ENCODE measurements at regions of chr16 and their contacts with region 1.

Region 1: GRCh38 chr16:86575754-86576557 is 2.4 kb upstream of the FOXL1 start:
- DNase-seq: peak; percentile 92
- H3K4me3 ChIP-seq: peak overlapping the region; percentile 54 to 67 (median 62)
- H3K27ac ChIP-seq: peak overlapping the region; percentile 68
- H3K4me1 ChIP-seq: peaks cover 22% of the 10 kb centered on the region
- H3K27me3 ChIP-seq: no peaks in the 10 kb centered on the region
- CTCF ChIP-seq: peak in 1 of 2 donors; percentile 60

Region 2: DNA sequence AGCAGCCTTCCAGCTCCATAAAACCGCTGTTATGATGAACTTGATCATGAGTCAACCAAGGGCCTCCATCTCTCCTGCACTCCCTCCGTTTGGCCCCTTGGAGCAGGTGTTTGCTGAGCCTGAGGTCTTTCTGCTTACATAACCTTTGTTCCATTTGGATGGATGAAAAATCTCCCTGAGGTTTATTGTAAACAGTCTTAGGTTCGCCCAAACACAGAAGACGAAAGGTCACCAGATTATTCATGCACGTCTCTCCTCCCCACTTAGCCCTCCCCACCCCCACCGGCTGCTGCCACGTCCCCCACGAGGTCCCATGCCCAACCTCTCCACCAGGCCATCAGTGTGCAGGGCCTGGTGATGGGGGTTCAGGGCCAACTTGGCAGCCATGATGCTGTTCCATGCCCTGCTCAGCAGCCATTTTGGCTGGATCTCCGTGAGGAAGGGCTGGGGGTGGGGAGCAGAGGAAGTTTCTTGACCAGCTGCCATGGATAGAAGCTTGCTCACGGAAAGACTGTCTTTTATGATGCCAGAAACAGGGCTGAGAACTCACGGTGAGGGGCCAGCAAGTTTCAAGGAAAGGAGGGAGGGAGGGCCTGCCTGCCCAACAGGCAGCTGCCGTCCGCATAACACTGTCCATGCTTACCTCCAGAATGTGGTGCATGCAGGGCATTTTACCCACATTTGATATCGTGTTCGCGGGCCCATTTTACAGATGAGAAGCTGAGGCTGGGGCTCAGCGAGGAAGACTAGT is 113.4 kb before region 1 on chr16:
- CTCF ChIA-PET with region 1: no interaction called
- dilution Hi-C with region 1: no loop called
- in situ Hi-C with region 1: no loop called
- intact Hi-C with region 1: no loop called
- DNase-seq: no peak
- H3K4me3 ChIP-seq: no peak overlapping the region
- H3K27ac ChIP-seq: no peak overlapping the region
- H3K4me1 ChIP-seq: no peaks in the 10 kb centered on the region
- H3K27me3 ChIP-seq: no peaks in the 10 kb centered on the region
- CTCF ChIP-seq: no peak

Region 3: GRCh38 chr16:86554917-86555703 is 20.8 kb before region 1 on chr16 and contains the start of gene MTHFSD:
- CTCF ChIA-PET with region 1: no interaction called
- dilution Hi-C with region 1: no loop called
- in situ Hi-C with region 1: no loop called
- intact Hi-C with region 1: no loop called
- DNase-seq: peak; percentile 85
- H3K4me3 ChIP-seq: peak within 1 kb of the TSS; percentile 75 to 93 (median 90)
- H3K27ac ChIP-seq: peak within 1 kb of the TSS; percentile 81
- H3K4me1 ChIP-seq: peaks cover 14% of the 10 kb centered on the region
- H3K27me3 ChIP-seq: no peaks in the 10 kb centered on the region
- CTCF ChIP-seq: no peak
- total RNA-seq, gene MTHFSD: 17.3 to 25.4 TPM

Region 4: DNA sequence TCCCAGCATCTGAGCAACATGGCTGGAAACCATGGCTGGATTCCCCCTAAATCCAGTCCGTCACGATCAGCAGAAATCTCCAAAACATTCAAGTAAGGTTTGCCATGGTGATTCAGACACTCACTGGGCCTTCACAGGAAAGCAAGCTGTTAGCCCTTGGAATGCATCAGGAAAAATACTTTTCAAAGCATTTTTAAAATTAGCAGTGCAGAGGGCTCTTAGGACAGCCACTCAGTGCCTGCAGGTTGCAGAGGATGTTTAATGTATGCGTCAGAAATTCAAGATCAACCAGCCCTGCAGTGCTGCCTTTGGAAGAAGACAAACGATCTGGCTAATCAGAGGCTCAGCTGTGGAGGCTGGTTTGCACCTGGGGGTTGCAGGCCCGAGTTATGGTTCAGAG is 52.7 kb after region 1 on chr16:
- CTCF ChIA-PET with region 1: no interaction called
- dilution Hi-C with region 1: no loop called
- in situ Hi-C with region 1: no loop called
- intact Hi-C with region 1: no loop called
- DNase-seq: no peak
- H3K4me3 ChIP-seq: no peak overlapping the region
- H3K27ac ChIP-seq: no peak overlapping the region
- H3K4me1 ChIP-seq: peaks cover 28% of the 10 kb centered on the region
- H3K27me3 ChIP-seq: no peaks in the 10 kb centered on the region
- CTCF ChIP-seq: no peak

Region 5: GRCh38 chr16:86680162-86680561 is 104.2 kb after region 1 on chr16:
- CTCF ChIA-PET with region 1: no interaction called
- dilution Hi-C with region 1: no loop called
- in situ Hi-C with region 1: no loop called
- intact Hi-C with region 1: loop called (anchors 5 kb)
- DNase-seq: peak; percentile 77
- H3K4me3 ChIP-seq: no peak overlapping the region
- H3K27ac ChIP-seq: no peak overlapping the region
- H3K4me1 ChIP-seq: peaks cover 32% of the 10 kb centered on the region
- H3K27me3 ChIP-seq: no peaks in the 10 kb centered on the region
- CTCF ChIP-seq: no peak

Region 6: GRCh38 chr16:86761111-86762031 is 185.4 kb after region 1 on chr16:
- CTCF ChIA-PET with region 1: no interaction called
- dilution Hi-C with region 1: no loop called
- in situ Hi-C with region 1: no loop called
- intact Hi-C with region 1: loop called (anchors 2 kb)
- DNase-seq: peak; percentile 39
- H3K4me3 ChIP-seq: no peak overlapping the region
- H3K27ac ChIP-seq: no peak overlapping the region
- H3K4me1 ChIP-seq: peaks cover 10% of the 10 kb centered on the region
- H3K27me3 ChIP-seq: no peaks in the 10 kb centered on the region
- CTCF ChIP-seq: peak; percentile 66 to 85

Region 7: GRCh38 chr16:86789621-86790051 is 213.7 kb after region 1 on chr16:
- CTCF ChIA-PET with region 1: no interaction called
- dilution Hi-C with region 1: no loop called
- in situ Hi-C with region 1: no loop called
- intact Hi-C with region 1: no loop called
- DNase-seq: no peak
- H3K4me3 ChIP-seq: no peak overlapping the region
- H3K27ac ChIP-seq: no peak overlapping the region
- H3K4me1 ChIP-seq: no peaks in the 10 kb centered on the region
- H3K27me3 ChIP-seq: no peaks in the 10 kb centered on the region
- CTCF ChIP-seq: no peak

Region 8: DNA sequence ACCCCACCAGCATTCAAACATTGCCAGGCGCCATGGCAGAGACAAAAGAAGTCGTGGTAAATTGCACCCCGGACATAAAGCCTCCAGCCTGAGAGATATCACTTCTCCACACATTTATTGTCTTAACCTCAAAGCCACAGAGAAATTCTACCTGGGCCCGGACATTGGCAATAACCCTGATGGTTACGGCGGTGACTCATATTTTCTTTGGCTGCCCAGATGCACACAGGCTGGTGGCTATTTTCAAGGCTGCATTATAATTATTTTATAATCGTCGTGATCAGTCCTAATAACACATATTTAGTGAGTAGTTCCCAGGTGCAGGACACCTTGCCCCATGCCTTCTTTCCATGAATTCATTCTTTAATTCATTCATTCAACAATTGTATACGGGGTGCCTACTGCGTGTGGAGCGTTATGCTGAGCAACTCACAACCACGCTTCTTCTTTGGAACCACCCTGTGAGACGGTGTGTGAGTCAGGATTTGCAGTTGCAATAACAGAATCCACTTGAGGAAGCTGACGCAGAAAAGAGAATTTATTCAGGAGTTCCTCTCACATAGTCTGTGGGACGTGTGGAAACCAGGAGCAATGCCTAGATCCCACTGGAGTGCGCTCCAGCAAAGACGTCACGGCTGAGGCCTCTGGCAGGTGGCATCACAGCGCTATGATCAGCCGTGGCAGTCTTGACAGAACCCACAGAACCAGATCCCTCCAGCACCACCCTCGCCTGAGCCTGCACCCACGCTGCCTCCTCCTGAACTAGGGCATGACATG is 248.1 kb after region 1 on chr16:
- CTCF ChIA-PET with region 1: no interaction called
- dilution Hi-C with region 1: no loop called
- in situ Hi-C with region 1: loop called in 1 of 2 experiments (anchors 25 kb)
- intact Hi-C with region 1: no loop called
- DNase-seq: peak; percentile 96
- H3K4me3 ChIP-seq: no peak overlapping the region
- H3K27ac ChIP-seq: peak overlapping the region; percentile 40
- H3K4me1 ChIP-seq: peaks cover 43% of the 10 kb centered on the region
- H3K27me3 ChIP-seq: no peaks in the 10 kb centered on the region
- CTCF ChIP-seq: no peak

Region 9: DNA sequence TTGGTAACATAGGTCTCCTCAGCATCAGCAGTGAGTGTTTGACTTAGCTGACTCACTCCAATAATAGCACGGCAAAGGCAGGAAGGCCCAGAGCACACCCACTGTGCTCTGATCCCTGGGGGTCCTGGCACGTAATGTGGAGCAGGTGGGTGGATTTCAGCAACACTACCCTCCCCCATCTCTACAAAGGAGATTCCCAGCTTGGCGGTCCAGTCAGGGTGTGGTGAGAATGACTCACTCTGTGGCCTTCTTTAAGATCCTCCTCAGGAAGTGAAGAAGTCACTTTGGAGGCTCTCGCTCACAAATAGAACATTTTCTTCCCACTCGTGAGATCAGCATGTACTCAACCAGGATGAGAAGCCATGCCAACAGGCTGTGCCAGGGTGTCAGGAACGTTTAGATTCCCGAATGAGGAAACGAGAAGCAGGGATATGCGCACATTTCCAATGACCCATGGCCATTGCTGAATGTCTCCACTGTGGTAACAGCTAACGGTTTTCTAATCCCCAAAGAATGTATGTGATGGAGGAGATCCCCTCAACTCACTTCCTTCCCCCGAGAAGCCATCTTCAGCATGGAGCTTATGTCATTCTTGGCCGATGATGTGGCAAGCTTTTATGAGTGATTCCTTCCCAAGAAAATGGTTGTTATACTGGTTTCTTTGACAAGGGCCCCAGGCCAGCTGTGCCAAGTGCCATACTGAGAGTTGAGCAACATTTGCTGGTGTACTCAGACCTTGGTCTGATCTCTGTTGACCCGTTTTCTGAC is 376.1 kb after region 1 on chr16:
- CTCF ChIA-PET with region 1: no interaction called
- dilution Hi-C with region 1: no loop called
- in situ Hi-C with region 1: no loop called
- intact Hi-C with region 1: loop called (anchors 2 kb)
- DNase-seq: peak; percentile 92
- H3K4me3 ChIP-seq: no peak overlapping the region
- H3K27ac ChIP-seq: peak overlapping the region; percentile 17
- H3K4me1 ChIP-seq: peaks cover 30% of the 10 kb centered on the region
- H3K27me3 ChIP-seq: no peaks in the 10 kb centered on the region
- CTCF ChIP-seq: no peak

Region 10: DNA sequence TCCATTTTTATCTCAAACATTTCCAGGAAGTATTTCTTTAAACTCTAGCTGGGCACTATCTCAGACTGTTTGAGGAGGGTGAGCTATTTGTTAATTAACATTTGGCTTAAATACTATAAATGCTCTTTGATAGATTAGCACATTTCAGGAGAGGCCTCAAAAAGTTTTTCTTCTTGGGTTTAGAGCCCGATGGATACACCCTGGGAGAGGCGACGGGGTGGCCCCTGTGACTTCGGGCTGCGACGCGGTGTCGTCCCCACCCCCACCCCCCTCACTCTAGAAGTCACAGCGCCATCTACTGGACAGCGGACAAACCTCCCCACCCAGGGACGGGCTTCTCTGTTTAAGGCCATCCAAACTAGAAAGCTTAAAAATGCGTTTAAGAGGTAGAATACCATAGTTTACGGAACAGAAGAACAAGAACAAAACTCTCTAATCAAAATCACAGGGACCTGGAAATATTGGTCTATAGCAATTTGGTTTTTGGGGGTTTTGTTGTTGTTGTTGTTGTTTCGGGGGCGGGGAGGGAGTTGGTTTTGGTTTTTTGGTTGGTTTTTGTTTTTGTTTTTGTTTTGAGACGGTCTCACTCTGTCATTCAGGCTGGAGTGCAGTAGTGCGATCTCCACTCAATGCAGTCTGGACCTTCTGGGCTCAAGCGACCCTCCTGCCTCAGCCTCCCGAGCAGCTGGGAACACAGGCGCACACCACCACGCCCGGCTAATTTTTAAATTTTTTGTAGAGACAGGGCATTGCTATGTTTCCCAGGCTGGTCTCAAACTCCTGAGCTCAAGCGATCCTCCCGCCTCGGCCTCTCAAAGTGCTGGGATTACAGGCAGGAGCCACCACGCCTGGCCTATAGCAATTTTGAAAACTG is 486.9 kb after region 1 on chr16:
- CTCF ChIA-PET with region 1: interaction called, 13 read pairs
- dilution Hi-C with region 1: no loop called
- in situ Hi-C with region 1: no loop called
- intact Hi-C with region 1: no loop called
- DNase-seq: peak; percentile 28
- H3K4me3 ChIP-seq: peak overlapping the region in 1 of 3 experiments; percentile 29
- H3K27ac ChIP-seq: no peak overlapping the region
- H3K4me1 ChIP-seq: no peaks in the 10 kb centered on the region
- H3K27me3 ChIP-seq: no peaks in the 10 kb centered on the region
- CTCF ChIP-seq: peak; percentile 70 to 86